ENCODE measurements at regions of chr2 and their contacts with region 1.

Region 1: DNA sequence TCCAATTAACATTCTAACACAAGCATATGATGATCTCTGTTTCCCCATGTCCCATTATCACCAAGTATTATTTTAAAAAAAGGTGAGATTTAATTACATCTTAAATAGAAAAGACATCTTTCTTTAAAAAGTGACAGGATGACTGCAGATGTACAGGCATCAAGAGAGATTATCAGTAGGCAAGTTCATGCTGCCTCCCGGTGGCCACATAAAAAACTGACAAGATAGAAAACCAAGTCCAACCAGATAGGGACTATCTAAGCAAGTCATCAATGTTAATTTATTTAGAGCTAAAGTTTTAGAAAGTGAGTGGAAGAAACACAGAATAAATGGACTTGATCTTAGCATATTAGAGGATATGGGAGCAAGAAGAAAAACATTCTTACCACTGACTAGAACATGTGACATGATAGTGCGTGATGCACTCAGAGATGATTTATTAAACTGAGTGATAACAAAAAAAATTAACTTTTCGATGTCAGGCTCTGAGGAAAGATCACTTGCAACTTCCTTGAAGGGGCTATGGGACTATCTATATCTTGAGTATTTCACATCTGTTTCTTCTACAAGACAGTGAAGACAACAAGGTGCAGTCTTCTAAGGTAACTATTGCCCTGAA is 5.4 kb upstream of the TDRD15 start:
- DNase-seq: peak in 1 of 2 donors; percentile 43
- H3K4me3 ChIP-seq: no peak overlapping the region
- H3K27ac ChIP-seq: no peak overlapping the region
- H3K4me1 ChIP-seq: no peaks in the 10 kb centered on the region
- H3K27me3 ChIP-seq: no peaks in the 10 kb centered on the region
- CTCF ChIP-seq: peak; percentile 61 to 72

Region 2: DNA sequence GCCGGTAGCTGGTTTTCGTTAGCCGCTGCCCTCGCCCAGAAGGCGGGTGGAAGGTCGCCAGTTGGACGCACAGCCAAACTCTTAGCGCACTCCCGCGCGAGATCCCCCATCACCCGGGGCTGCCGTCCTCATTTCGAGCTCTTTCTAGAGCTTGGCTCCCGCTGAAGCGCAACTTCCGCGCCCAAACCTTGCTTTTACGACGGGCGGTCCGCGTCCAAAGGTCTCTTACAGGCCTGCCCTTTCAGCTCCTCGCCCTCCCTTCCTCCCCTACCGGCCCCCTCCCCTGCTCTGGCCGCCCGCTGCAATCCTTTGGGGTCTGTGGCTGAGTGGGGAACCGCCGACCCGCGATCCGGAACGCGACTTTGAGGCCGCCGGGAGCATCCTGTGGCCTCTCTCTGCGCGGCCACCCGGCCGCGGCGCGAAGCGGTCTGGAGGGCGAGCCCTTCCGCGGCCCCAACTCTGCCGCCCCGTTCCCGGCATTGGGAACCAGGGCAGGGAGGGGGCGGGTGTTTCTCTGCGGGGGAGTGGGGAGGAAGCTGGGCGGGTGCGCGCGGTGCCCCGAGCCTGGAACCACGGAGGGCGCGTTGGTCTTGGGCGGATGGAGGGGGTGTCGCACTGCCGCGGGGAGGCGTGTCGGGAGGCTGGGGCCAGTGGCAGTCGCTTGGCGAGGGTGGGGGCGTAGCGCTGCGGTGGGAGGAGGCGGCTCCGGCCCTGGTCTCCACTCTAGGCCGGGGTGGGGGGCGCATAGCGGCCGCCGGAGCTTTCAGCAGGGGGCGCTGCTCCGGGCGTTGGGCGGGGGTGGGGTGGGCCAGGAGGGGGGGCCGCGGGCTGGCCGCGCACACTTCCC is 451.9 kb before region 1 on chr2 and contains the start of gene GDF7:
- intact Hi-C with region 1: loop called (anchors 5 kb)
- DNase-seq: peak; percentile 72 to 93
- H3K4me3 ChIP-seq: peak within 1 kb of the TSS; percentile 57 to 84
- H3K27ac ChIP-seq: peak within 1 kb of the TSS; percentile 92 to 95
- H3K4me1 ChIP-seq: peaks cover 0 to 63% (median 35%) of the 10 kb centered on the region in 4 donors
- H3K27me3 ChIP-seq: peaks cover 0 to 3% of the 10 kb centered on the region in 2 donors
- CTCF ChIP-seq: peak in 1 of 2 experiments; percentile 57

Region 3: GRCh38 chr2:21155365-21156136 is 37.1 kb after region 1 on chr2:
- intact Hi-C with region 1: no loop called
- DNase-seq: no peak
- H3K4me3 ChIP-seq: no peak overlapping the region
- H3K27ac ChIP-seq: no peak overlapping the region
- H3K4me1 ChIP-seq: no peaks in the 10 kb centered on the region
- H3K27me3 ChIP-seq: no peaks in the 10 kb centered on the region
- CTCF ChIP-seq: no peak

Measured in tibial artery (tissue), 4 donors.